GM10248 (cell line): ENCODE measurements at regions of chr17 and their contacts with region 1.

Region 1: GRCh38 chr17:33769066-33769465 is 476.0 kb upstream of the ASIC2 start:
- DNase-seq: no peak
- CTCF ChIP-seq: no peak

Region 2: DNA sequence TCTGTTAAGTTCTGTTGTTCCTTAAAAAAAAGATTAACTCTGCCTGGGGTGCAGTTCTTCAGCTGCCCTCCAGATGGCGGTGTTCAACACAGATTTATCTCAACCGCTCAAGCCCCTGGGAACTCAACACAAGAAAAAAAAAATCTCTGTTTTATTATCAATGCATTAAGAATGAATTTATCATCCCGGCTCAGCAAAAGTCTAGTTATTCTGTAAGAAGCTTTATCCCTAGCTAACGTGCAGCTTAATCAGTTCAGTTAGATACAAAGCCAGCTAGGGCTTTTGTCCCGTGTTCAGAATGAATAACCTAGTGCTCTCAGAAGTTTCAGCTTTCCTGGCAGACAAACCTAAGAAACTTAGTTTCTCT is 10.1 kb after region 1 on chr17:
- CTCF ChIA-PET with region 1: interaction called, 16 read pairs
- POLR2A ChIA-PET with region 1: no interaction called
- DNase-seq: peak; percentile 51
- CTCF ChIP-seq: peak; percentile 86